ENCODE measurements at regions of chr3 and their contacts with region 1.

Region 1: GRCh38 chr3:38004415-38005076 is 14.0 kb downstream of the VILL start:
- DNase-seq: peak in 1 of 2 donors; percentile 86
- H3K4me3 ChIP-seq: no peak overlapping the region
- H3K27ac ChIP-seq: peak overlapping the region in 1 of 2 donors; percentile 50
- H3K4me1 ChIP-seq: peaks cover 0 to 4% of the 10 kb centered on the region in 2 donors
- H3K27me3 ChIP-seq: no peaks in the 10 kb centered on the region
- CTCF ChIP-seq: peak; percentile 44 to 71 (median 49)

Region 2: DNA sequence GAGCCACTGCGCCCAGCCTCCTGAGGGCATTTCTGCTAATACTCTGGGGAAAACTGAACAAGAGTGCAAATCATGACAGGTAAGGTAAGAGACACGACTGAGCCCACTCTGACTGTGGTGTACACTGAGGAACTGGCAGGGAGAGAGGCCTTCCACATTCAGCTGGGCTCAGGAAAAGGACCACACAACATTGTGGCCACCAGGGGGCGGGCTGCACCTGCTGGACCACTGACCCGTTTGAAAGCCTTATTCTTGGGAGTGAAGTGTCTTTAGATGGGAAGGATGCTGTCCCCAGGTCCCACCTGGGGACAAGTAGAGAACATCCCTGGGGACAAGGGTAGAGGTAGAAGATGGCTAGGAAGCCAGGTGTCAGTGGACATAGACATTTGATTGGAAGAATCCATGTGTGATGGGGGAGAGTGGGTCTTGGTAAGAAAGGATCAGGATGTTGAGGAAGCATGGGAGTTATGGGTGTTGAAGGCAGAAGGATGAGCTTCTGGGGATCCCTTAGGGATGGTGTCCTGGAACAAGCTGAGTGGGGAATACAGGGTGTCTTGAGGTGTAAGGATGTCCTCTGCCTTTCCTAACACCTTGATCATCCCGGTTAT is 149.1 kb before region 1 on chr3:
- intact Hi-C with region 1: loop called (anchors 1 kb)
- DNase-seq: peak in 1 of 2 donors; percentile 91
- H3K4me3 ChIP-seq: no peak overlapping the region
- H3K27ac ChIP-seq: no peak overlapping the region
- H3K4me1 ChIP-seq: peaks cover 7 to 13% of the 10 kb centered on the region in 2 donors
- H3K27me3 ChIP-seq: no peaks in the 10 kb centered on the region
- CTCF ChIP-seq: peak; percentile 87 to 97 (median 90)

Region 3: GRCh38 chr3:38039899-38040261 is 35.3 kb after region 1 on chr3:
- intact Hi-C with region 1: loop called (anchors 2 kb)
- DNase-seq: peak; percentile 59 to 84
- H3K4me3 ChIP-seq: peak overlapping the region; percentile 68 to 73
- H3K27ac ChIP-seq: no peak overlapping the region
- H3K4me1 ChIP-seq: peaks cover 0 to 9% of the 10 kb centered on the region in 2 donors
- H3K27me3 ChIP-seq: no peaks in the 10 kb centered on the region
- CTCF ChIP-seq: peak; percentile 10 to 59 (median 25)

Measured in ascending aorta (tissue), 2 donors.